ENCODE measurements at regions of chr13 and their contacts with region 1.

Region 1: GRCh38 chr13:49985129-49985528 is 11.7 kb upstream of the TRIM13 start:
- DNase-seq: no peak
- H3K4me3 ChIP-seq: no peak overlapping the region
- H3K27ac ChIP-seq: no peak overlapping the region
- H3K4me1 ChIP-seq: peaks cover 0 to 19% (median 0%) of the 10 kb centered on the region in 3 donors
- H3K27me3 ChIP-seq: no peaks in the 10 kb centered on the region
- CTCF ChIP-seq: no peak
- POLR2A ChIP-seq: no peak

Region 2: GRCh38 chr13:49858183-49858856 is 126.8 kb before region 1 on chr13:
- intact Hi-C with region 1: no loop called
- DNase-seq: no peak
- H3K4me3 ChIP-seq: no peak overlapping the region
- H3K27ac ChIP-seq: peak overlapping the region in 1 of 4 donors; percentile 49
- H3K4me1 ChIP-seq: peaks cover 0 to 20% (median 4%) of the 10 kb centered on the region in 3 donors
- H3K27me3 ChIP-seq: no peaks in the 10 kb centered on the region
- CTCF ChIP-seq: no peak
- POLR2A ChIP-seq: no peak

Region 3: DNA sequence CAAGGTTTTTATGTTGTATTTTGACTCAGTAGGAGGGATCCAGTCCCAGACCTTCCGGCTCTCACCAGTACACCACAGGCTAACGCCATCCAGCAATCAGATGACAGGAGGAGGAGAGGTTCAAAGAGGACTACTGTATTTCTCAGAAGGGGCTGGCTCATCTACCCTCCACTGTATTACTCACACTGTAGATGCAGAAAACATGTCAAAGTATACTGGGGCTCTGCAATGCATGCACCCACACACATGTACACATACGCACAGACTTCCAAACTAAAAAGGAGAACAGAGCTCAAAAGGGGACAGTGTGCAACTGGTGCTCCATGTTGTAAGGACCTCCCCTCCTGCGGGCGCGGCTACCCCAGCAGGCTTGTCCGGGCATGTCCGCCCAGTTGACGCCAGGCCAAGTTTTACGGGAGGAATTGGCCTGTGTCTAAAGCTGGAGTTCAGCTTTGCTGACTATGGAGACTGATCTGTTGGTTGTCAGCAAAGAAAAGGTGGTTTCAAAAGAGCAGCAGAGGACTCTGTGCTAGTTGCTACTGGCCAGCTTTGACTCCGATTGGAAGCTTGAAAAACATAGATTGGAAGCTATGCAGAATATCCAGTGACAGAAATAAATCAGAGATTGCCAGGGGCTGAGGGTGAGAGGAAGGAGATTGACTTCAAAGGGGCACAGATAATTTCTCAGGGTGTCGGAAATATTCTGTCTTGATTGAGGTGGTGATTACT is 544.2 kb after region 1 on chr13:
- intact Hi-C with region 1: loop called (anchors 10 kb)
- DNase-seq: no peak
- H3K4me3 ChIP-seq: peak overlapping the region in 1 of 4 donors; percentile 23
- H3K27ac ChIP-seq: peak overlapping the region in 3 of 4 donors; percentile 23 to 54 (median 30)
- H3K4me1 ChIP-seq: peaks cover 15 to 36% (median 18%) of the 10 kb centered on the region in 3 donors
- H3K27me3 ChIP-seq: no peaks in the 10 kb centered on the region
- CTCF ChIP-seq: no peak
- POLR2A ChIP-seq: no peak

Measured in esophagus squamous epithelium (tissue), 5 donors.